Activated CD4-positive, alpha-beta memory T cell treated with anti-CD3 and anti-CD28 coated beads for 36 hours (primary cell): ENCODE measurements at regions of chr17 and their contacts with region 1.

Region 1: DNA sequence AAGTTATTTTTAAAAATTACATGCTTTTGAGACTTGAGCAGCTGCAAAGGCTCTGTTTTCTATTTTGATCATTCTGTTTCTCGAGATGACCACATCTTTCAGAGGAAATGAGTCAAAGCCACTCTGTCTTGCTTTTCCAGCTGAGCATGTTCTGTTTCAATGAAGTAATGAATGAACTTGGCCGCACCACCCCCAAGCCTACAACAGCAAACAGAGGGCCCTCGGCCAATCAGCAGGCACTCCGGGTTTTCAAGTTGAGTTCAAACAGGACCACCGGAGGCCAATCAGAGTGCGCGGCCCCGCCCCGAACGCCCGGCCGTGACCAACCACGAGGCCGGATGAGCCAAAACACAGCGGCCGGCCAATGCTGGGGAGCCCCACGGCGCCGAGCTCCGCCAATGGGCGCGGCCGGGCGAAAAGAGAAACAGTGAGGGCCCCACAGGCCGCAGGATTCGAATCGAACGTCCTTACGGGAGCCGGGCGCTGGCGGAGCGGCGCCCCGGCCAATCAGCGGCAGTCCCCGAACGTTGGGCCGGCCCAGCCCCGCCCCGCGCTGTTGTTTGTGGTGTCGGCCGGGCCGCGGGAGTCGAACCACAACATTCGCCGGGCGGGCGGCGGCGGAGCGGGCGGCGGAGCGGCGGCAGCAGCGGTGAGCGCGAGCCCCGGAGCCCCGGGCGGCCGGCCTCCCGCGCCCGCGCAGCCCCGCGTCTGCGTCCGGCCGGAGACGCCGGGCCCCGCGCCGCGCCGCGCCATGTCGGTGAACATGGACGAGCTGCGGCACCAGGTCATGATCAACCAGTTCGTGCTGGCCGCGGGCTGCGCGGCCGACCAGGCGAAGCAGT is at the start of gene UBALD2:
- DNase-seq: peak; percentile 100
- H3K4me3 Mint-ChIP-seq: peak within 1 kb of the TSS; percentile 92
- H3K27ac Mint-ChIP-seq: peak within 1 kb of the TSS; percentile 97
- H3K4me1 Mint-ChIP-seq: peaks cover 48% of the 10 kb centered on the region
- H3K27me3 Mint-ChIP-seq: no peaks in the 10 kb centered on the region
- total RNA-seq, gene UBALD2: 317 TPM

Region 2: DNA sequence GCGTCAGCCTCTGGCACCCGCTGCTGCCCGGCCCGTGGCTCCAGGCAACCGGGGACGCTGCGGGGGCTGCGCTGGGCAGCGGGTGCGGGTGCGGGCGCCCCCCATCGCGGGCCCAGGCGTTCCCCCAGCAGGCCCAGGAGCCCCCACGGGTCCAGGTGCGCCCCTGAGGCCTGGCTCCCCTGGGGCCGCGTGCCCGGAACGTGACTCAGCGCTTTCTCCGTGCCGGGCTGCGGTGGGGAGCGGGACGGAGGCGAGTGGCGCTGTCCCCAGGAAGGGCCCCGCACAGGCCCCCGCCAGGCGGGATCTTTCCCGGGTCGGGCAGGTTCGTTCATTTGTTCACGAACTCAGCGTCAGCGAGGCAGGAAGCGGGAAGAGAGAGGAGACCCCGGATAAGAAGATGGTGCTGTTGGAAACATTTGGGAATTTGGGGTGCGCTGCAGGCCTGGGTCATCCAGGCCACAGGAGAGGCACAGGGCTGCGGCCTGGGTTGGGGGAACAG is 143.0 kb before region 1 on chr17:
- CTCF ChIA-PET with region 1: interaction called, 13 read pairs
- POLR2A ChIA-PET with region 1: interaction called, 9 read pairs
- intact Hi-C with region 1: no loop called
- DNase-seq: peak; percentile 35
- H3K4me3 Mint-ChIP-seq: no peak overlapping the region
- H3K27ac Mint-ChIP-seq: no peak overlapping the region
- H3K4me1 Mint-ChIP-seq: peaks cover 9% of the 10 kb centered on the region
- H3K27me3 Mint-ChIP-seq: no peaks in the 10 kb centered on the region

Region 3: DNA sequence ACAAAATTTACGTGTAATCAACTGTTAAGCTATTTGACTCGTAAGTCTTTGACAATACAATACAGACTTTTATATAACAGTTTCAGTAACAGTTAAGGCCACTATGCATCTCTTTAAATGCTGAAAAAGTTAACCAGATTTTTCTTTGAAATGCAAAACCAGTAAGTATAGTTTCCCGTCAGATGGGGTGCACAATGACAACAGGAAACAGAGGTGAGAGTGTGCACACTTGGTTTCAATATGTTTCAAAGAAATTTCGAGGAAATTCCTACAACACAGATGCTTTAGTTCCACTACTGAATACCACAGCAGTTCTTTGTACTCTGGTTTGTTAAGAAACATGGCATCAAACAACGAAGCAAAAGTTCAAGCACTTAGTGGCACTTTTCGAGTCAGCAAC is 73.1 kb before region 1 on chr17:
- CTCF ChIA-PET with region 1: interaction called, 7 read pairs
- POLR2A ChIA-PET with region 1: interaction called, 298 read pairs
- intact Hi-C with region 1: loop called (anchors 1 kb)
- DNase-seq: peak; percentile 55
- H3K4me3 Mint-ChIP-seq: peak overlapping the region; percentile 61
- H3K27ac Mint-ChIP-seq: peak overlapping the region; percentile 97
- H3K4me1 Mint-ChIP-seq: peaks cover 59% of the 10 kb centered on the region
- H3K27me3 Mint-ChIP-seq: no peaks in the 10 kb centered on the region

Region 4: GRCh38 chr17:76240461-76241203 is 24.3 kb before region 1 on chr17 and contains the start of gene RNF157:
- CTCF ChIA-PET with region 1: interaction called, 13 read pairs
- POLR2A ChIA-PET with region 1: interaction called, 51 read pairs
- intact Hi-C with region 1: no loop called
- DNase-seq: peak; percentile 69
- H3K4me3 Mint-ChIP-seq: peak within 1 kb of the TSS; percentile 77
- H3K27ac Mint-ChIP-seq: peak within 1 kb of the TSS; percentile 67
- H3K4me1 Mint-ChIP-seq: peaks cover 41% of the 10 kb centered on the region
- H3K27me3 Mint-ChIP-seq: no peaks in the 10 kb centered on the region
- total RNA-seq, gene RNF157: 25.4 to 28.0 TPM

Region 5: DNA sequence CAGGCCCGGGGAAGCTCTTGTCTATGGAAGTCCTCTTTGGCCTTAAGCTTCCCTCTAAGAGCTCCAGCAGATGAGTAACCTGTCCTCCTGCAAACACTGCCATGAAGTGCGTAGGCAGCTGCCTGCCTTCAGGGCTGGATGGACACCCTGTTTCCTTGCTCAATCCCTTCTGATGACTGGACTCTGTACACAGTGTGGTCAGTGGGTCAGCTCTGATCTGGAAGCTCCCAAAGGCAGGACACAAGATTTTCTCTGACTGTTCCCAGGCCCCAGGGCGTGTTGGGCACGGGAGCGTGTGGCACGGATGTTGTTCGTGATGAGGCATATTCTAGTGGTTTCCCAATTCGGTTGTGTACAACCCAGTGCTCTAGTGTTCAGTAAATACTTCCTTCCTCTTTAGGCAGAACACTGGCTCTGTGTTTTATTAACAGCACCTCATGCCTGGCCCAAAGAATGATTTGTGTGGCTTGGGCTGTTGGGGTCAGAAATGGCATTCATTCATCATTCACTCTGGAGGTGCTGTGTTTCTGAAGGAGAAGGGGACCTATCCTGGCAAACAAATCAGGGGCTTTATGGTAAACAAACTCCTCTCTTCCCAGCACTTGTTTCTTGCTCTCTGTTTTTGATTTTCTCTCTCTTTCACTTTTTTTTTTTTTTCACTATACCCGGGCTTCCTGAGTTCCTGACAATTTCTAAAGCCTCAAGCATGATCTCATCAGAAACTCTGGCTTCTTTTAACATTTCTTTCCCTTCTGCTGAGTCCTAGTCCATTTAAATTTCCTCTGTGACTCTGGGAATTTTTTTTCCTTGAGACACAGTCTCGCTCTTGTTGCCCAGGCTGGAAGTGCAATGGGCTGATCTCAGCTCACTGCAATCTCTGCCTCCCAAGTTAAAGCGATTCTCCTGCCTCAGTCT is 12.7 kb before region 1 on chr17:
- CTCF ChIA-PET with region 1: interaction called, 13 read pairs
- POLR2A ChIA-PET with region 1: interaction called, 51 read pairs
- intact Hi-C with region 1: loop called (anchors 1 kb)
- DNase-seq: peak; percentile 61
- H3K4me3 Mint-ChIP-seq: peak overlapping the region; percentile 43
- H3K27ac Mint-ChIP-seq: peak overlapping the region; percentile 83
- H3K4me1 Mint-ChIP-seq: peaks cover 53% of the 10 kb centered on the region
- H3K27me3 Mint-ChIP-seq: no peaks in the 10 kb centered on the region